Activated T-helper 1 cell treated with anti-CD3 and anti-CD28 coated beads, Interleukin-12 subunit alpha, Interleukin-12 subunit beta, Interleukin-2, Interleukin-4 antibody, amounts not matched to agents 30 ng/mL and 10 ng/mL and 1 ng/mL, durations not matched to agents 14 hours and 24 hours and 36 hours (primary cell): ENCODE measurements at regions of chr3 and their contacts with region 1.

Region 1: GRCh38 chr3:187000711-187001151 is 70.4 kb downstream of the ST6GAL1 start:
- DNase-seq: peak; percentile 29
- H3K4me3 Mint-ChIP-seq: peak overlapping the region; percentile 30
- H3K27ac Mint-ChIP-seq: peak overlapping the region; percentile 90
- H3K4me1 Mint-ChIP-seq: peaks cover 86% of the 10 kb centered on the region
- H3K27me3 Mint-ChIP-seq: no peaks in the 10 kb centered on the region

Region 2: GRCh38 chr3:185937689-185938463 is 1062.9 kb before region 1 on chr3 and contains the start of gene TRA2B:
- intact Hi-C with region 1: loop called (anchors 5 kb)
- DNase-seq: peak; percentile 98
- H3K4me3 Mint-ChIP-seq: peak within 1 kb of the TSS; percentile 97
- H3K27ac Mint-ChIP-seq: peak within 1 kb of the TSS; percentile 99
- H3K4me1 Mint-ChIP-seq: peaks cover 40% of the 10 kb centered on the region
- H3K27me3 Mint-ChIP-seq: peaks cover 8% of the 10 kb centered on the region
- total RNA-seq, gene TRA2B: 279 and 312 TPM in 2 replicates

Region 3: GRCh38 chr3:186138272-186138981 is 862.3 kb before region 1 on chr3:
- intact Hi-C with region 1: no loop called
- DNase-seq: no peak
- H3K4me3 Mint-ChIP-seq: no peak overlapping the region
- H3K27ac Mint-ChIP-seq: no peak overlapping the region
- H3K4me1 Mint-ChIP-seq: no peaks in the 10 kb centered on the region
- H3K27me3 Mint-ChIP-seq: peaks cover 17% of the 10 kb centered on the region

Region 4: DNA sequence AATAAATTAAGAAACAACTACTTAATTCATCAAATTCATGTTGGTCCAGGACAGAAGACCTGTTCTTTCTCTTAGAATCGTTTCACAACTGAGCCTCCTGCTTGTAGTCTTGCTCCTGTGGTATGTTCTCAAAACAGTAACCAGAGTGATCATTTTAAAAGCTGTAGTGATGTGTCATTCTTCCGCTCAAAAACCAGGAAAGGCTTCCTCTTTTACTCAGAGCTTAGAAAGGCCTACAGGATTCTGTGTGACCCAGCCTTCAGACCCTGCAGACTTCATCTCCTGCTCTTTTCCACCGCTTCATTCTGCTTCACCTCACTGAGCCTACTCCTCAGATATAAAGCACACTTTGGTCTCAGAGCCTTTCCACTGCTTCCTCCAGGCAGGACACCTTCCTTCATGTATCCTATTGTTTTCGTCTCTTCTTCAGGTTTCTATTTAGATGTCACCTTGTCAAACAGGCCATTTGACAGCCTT is 47.7 kb before region 1 on chr3:
- intact Hi-C with region 1: loop called (anchors 2 kb)
- DNase-seq: peak; percentile 16
- H3K4me3 Mint-ChIP-seq: peak overlapping the region; percentile 59
- H3K27ac Mint-ChIP-seq: peak overlapping the region; percentile 89
- H3K4me1 Mint-ChIP-seq: peaks cover 83% of the 10 kb centered on the region
- H3K27me3 Mint-ChIP-seq: no peaks in the 10 kb centered on the region

Region 5: GRCh38 chr3:186964071-186964470 is 36.7 kb before region 1 on chr3:
- intact Hi-C with region 1: no loop called
- DNase-seq: no peak
- H3K4me3 Mint-ChIP-seq: no peak overlapping the region
- H3K27ac Mint-ChIP-seq: peak overlapping the region; percentile 29
- H3K4me1 Mint-ChIP-seq: peaks cover 69% of the 10 kb centered on the region
- H3K27me3 Mint-ChIP-seq: no peaks in the 10 kb centered on the region

Region 6: DNA sequence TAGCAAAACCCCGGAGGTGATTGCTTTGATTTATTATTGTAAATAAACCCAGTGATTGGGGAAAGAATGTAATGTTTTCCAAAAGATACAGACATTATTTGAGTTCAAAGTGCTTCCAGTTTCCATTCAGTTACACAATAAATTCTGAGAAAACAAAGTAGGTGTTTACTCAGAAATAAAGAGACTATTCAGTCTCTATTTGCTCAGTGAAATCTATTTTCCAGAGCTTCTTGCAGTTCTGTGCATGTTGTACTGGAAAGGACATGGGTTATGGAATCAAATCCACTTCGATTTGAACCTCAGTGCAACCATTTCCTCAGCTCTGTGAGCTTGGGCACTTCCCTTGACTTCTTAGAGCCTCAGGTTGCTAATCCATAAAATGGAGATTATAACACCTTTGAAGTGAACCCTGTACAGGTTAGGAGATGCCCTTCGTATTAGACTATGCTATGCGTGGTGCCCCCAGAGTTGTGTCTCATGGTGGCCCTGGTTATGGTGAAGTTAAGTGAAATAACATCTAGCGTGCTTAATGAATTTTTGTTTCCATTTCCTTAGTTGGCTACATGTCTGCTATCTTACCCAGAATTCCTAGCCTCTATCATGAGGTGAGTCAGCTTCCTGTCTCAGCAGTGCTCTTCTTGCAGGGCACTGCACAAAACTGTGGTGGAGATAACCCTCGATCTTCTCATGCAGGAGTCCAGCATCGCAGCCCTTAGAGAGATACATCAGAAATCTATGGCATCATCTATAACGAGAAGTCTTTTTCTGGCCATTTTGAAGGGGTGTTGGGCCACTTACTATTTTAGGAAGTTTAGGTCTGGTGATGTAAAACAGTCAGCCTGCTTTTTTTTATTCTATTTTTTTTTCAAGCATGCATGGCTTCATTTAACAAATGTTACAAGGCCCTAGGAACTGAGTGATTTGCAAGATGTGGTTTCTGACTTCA is 40.9 kb after region 1 on chr3:
- intact Hi-C with region 1: loop called (anchors 1 kb)
- DNase-seq: peak; percentile 57
- H3K4me3 Mint-ChIP-seq: peak overlapping the region; percentile 82
- H3K27ac Mint-ChIP-seq: peak overlapping the region; percentile 95
- H3K4me1 Mint-ChIP-seq: peaks cover 85% of the 10 kb centered on the region
- H3K27me3 Mint-ChIP-seq: no peaks in the 10 kb centered on the region

Region 7: DNA sequence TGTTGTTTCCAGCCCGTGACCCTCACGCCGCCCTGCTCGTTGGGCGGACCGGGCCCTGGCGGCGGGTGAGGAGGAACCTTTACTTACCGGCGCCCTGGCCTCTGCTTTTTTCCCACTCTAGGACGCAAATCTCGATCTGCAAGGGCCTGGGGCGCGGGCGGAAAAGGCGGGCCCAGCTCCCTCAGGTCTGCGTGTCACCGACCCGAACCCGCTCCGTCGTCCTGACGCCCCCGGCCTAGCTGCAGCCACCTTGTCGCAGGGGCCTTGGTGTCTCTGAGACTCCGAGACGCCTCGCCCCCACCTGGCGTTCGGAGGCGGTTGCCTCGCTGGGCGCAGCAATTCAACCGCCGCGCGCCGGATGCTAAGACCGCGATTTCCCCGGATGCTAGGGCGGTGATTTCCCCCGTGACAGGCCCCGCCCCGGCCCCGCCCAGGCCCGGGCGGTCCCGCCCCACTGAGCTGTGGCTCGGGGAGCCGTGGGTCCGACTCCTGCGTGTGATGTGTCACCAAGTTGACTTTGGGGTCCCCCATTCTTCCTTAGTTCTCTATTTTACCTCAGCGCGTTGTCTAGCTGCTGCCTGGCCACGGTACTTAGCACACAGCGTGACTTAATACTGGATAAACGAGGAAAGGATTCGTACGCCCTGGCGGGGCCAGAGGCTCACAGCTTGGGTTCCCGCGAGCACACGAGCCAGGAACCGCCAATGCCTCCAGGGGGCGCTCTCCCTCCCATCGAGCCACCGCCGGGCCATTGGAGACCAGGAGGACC is 138.6 kb after region 1 on chr3 and contains the start of gene RPL39L:
- intact Hi-C with region 1: loop called (anchors 2 kb)
- DNase-seq: peak; percentile 91
- H3K4me3 Mint-ChIP-seq: peak within 1 kb of the TSS; percentile 92
- H3K27ac Mint-ChIP-seq: peak within 1 kb of the TSS; percentile 96
- H3K4me1 Mint-ChIP-seq: peaks cover 34% of the 10 kb centered on the region
- H3K27me3 Mint-ChIP-seq: peaks cover 3% of the 10 kb centered on the region
- total RNA-seq, gene RPL39L: 7.5 and 8.3 TPM in 2 replicates